ENCODE measurements at regions of chr12 and their contacts with region 1.

Region 1: DNA sequence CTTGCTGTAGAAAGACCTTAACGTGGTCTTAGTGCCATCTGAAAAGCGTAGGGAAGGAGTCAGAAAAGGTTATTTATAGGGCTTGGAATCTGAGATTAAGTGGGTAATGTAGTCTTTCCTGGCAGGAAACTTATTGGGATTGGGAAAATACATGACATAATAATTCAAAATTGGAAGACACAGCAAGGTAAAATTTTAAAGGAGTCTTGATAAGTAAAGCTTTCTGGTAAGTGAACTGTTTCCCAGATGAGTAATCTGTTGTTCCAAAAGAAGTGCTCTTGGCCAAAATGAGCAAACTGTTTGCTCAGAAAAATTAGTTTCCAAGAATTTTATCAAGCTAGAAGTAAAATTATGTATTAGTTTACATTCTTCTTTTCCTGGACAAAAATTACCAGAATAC is 149.3 kb upstream of the TMTC2 start:
- DNase-seq: no peak
- ATAC-seq: no peak
- H3K4me3 Mint-ChIP-seq: no peak overlapping the region
- H3K27ac Mint-ChIP-seq: no peak overlapping the region
- H3K4me1 Mint-ChIP-seq: no peaks in the 10 kb centered on the region
- H3K27me3 Mint-ChIP-seq: no peaks in the 10 kb centered on the region
- CTCF ChIP-seq: no peak

Region 2: DNA sequence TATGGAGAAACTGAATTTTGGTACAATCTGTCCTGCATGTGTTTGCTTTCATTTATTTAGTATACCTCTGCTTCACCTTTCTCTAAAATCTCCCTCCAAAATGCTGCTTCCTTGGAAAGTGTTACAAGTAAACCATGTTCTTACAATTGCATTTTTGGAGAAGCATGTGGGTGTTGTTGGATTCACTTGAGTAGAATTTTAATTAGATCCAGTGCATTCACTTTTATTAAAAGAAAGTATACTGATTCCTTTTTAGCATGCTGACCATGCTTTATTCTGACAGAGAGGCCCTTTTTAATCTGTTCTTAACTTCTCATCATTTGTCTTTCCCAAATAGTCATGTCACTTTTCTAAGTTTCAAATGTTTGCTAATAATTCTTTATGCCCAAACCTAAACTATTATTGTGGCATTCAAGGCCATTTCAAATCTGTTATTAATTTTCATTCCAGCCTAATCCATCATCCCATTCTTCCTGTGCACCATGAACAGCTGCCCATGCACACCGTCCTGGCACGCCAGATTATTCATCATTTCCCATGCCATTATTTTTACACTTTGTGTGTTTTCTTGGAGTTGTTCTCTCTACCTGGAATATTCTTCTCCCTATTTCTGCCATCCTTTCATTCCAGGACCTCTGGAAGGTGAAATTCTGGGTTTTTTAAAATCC is 88.4 kb before region 1 on chr12:
- CTCF ChIA-PET with region 1: no interaction called
- POLR2A ChIA-PET with region 1: no interaction called
- intact Hi-C with region 1: no loop called
- DNase-seq: no peak
- ATAC-seq: no peak
- H3K4me3 Mint-ChIP-seq: no peak overlapping the region
- H3K27ac Mint-ChIP-seq: no peak overlapping the region
- H3K4me1 Mint-ChIP-seq: no peaks in the 10 kb centered on the region
- H3K27me3 Mint-ChIP-seq: no peaks in the 10 kb centered on the region
- CTCF ChIP-seq: no peak

Region 3: DNA sequence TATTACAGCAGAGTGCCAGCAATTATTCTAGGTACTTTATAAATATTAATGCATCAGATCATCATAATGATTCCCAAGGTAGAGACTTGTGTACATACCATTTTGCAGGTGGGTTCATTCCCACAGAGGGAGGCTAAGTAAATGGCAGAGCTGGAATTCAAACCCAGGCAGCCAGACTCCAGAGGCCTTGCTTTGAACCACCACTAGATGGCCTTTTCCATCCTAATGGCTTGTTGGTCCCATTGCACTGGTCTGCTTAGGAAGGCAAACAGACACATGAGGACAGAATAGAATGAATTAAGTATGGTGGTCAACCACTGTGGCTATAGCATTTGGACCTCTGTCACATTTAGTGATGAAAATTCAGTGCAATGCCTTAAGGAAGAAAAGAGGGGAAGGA is 20.4 kb before region 1 on chr12:
- CTCF ChIA-PET with region 1: no interaction called
- POLR2A ChIA-PET with region 1: no interaction called
- intact Hi-C with region 1: loop called (anchors 1 kb)
- DNase-seq: no peak
- ATAC-seq: no peak
- H3K4me3 Mint-ChIP-seq: no peak overlapping the region
- H3K27ac Mint-ChIP-seq: no peak overlapping the region
- H3K4me1 Mint-ChIP-seq: no peaks in the 10 kb centered on the region
- H3K27me3 Mint-ChIP-seq: no peaks in the 10 kb centered on the region
- CTCF ChIP-seq: peak; percentile 6

Region 4: GRCh38 chr12:82565966-82566365 is 28.5 kb after region 1 on chr12:
- CTCF ChIA-PET with region 1: no interaction called
- POLR2A ChIA-PET with region 1: no interaction called
- intact Hi-C with region 1: no loop called
- DNase-seq: no peak
- ATAC-seq: no peak
- H3K4me3 Mint-ChIP-seq: no peak overlapping the region
- H3K27ac Mint-ChIP-seq: no peak overlapping the region
- H3K4me1 Mint-ChIP-seq: no peaks in the 10 kb centered on the region
- H3K27me3 Mint-ChIP-seq: no peaks in the 10 kb centered on the region
- CTCF ChIP-seq: no peak